Naive thymus-derived CD4-positive, alpha-beta T cell (primary cell): ENCODE measurements at regions of chr10 and their contacts with region 1.

Region 1: GRCh38 chr10:103481974-103482531 is 3.0 kb upstream of the CALHM3 start:
- DNase-seq: peak in 7 of 9 donors; percentile 41 to 69 (median 57)
- ATAC-seq: peak; percentile 79
- H3K4me3 ChIP-seq: no peak overlapping the region
- H3K4me3 Mint-ChIP-seq: no peak overlapping the region
- H3K27ac ChIP-seq: no peak overlapping the region
- H3K27ac Mint-ChIP-seq: no peak overlapping the region
- H3K4me1 ChIP-seq: no peaks in the 10 kb centered on the region
- H3K4me1 Mint-ChIP-seq: peaks cover 0 to 27% (median 4%) of the 10 kb centered on the region in 7 donors
- H3K27me3 ChIP-seq: no peaks in the 10 kb centered on the region
- H3K27me3 Mint-ChIP-seq: peaks cover 0 to 6% (median 0%) of the 10 kb centered on the region in 5 donors

Region 2: DNA sequence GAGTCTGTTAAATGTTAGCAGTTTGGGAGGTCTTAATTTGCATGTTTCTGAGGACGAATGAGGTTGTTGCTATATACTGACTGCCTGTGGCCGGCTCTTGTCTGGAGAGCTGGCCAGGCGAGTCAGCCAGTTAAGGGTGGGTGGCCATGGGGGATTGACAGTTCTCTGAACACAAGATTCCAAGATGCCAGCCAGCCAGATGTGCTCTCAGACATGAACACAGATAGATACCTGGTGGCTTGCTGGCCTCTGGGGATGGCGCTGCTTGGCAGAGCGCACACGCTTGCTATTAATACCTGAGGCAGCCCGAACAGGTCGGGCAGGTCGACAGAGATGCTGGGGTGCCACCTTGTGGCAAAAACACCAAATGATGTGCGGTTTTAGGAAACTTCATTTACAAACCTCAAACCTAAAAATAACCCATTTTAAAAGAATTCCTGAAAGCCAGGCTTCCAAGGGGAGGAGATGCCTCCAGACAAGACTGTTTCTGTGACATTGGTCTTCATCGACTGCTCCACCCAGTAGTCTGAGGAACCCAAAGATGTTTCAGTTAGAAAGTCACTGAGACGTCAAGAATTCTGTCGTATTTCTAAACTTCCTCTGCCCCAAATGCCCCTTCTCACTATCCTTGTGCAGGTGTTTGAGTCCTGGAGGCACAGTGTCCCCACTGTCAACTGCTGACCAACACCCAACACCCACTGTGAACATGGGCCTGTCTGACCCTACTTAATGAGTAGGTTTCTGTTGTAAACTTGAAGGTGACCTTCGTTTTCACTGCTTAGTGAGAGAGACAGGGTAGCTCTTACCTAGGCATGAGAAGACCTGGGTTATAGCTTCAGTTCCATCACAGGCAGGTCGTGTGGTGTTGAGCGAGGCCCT is 412.4 kb before region 1 on chr10:
- CTCF ChIA-PET with region 1: no interaction called
- POLR2A ChIA-PET with region 1: no interaction called
- intact Hi-C with region 1: loop called (anchors 1 to 10 kb)
- DNase-seq: peak; percentile 48 to 75 (median 68)
- ATAC-seq: peak; percentile 89
- H3K4me3 ChIP-seq: no peak overlapping the region
- H3K4me3 Mint-ChIP-seq: peak overlapping the region in 3 of 10 donors; percentile 21 to 61 (median 33)
- H3K27ac ChIP-seq: no peak overlapping the region
- H3K27ac Mint-ChIP-seq: peak overlapping the region in 6 of 9 donors; percentile 16 to 75 (median 62)
- H3K4me1 ChIP-seq: no peaks in the 10 kb centered on the region
- H3K4me1 Mint-ChIP-seq: peaks cover 16 to 35% (median 23%) of the 10 kb centered on the region in 7 donors
- H3K27me3 ChIP-seq: no peaks in the 10 kb centered on the region
- H3K27me3 Mint-ChIP-seq: no peaks in the 10 kb centered on the region

Region 3: GRCh38 chr10:103333925-103334520 is 148.0 kb before region 1 on chr10:
- CTCF ChIA-PET with region 1: no interaction called
- POLR2A ChIA-PET with region 1: no interaction called
- intact Hi-C with region 1: loop called in 1 of 2 experiments (anchors 5 kb)
- DNase-seq: peak in 5 of 9 donors; percentile 4 to 35 (median 18)
- ATAC-seq: no peak
- H3K4me3 ChIP-seq: no peak overlapping the region
- H3K4me3 Mint-ChIP-seq: no peak overlapping the region
- H3K27ac ChIP-seq: no peak overlapping the region
- H3K27ac Mint-ChIP-seq: no peak overlapping the region
- H3K4me1 ChIP-seq: no peaks in the 10 kb centered on the region
- H3K4me1 Mint-ChIP-seq: no peaks in the 10 kb centered on the region
- H3K27me3 ChIP-seq: no peaks in the 10 kb centered on the region
- H3K27me3 Mint-ChIP-seq: no peaks in the 10 kb centered on the region

Region 4: DNA sequence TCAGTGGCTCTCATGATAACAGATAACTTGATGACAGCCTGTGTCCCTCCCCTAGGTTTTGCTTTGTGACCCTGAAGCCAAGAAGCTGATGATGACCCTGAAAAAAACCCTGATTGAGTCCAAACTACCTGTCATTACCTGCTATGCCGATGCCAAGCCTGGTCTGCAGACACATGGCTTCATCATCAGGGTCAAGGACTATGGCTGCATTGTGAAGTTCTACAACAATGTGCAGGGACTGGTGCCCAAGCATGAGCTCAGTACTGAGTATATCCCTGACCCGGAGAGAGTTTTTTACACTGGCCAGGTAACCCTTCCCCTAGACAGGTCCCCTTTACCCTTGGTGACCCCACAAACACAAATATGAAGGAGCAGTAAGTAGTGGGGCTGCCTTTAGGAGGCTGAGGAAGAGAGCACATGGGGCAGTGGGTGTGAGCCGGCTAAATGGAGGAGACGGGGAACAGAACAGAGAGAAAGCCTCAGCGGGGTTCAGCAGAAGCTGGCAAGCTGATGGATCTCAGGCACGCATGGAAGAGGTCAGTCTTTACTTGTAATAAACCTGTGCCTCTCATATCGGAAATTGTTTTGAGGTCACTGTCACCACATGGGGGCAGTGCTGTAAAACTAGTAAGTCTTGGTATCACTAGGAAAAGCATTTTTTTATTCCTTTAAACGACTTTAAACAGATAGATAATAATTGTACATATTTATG is 65.5 kb before region 1 on chr10:
- CTCF ChIA-PET with region 1: interaction called, 99 read pairs
- POLR2A ChIA-PET with region 1: interaction called, 4 read pairs
- intact Hi-C with region 1: loop called (anchors 1 kb)
- DNase-seq: peak; percentile 29 to 62 (median 52)
- ATAC-seq: peak; percentile 64
- H3K4me3 ChIP-seq: no peak overlapping the region
- H3K4me3 Mint-ChIP-seq: no peak overlapping the region
- H3K27ac ChIP-seq: no peak overlapping the region
- H3K27ac Mint-ChIP-seq: no peak overlapping the region
- H3K4me1 ChIP-seq: no peaks in the 10 kb centered on the region
- H3K4me1 Mint-ChIP-seq: peaks cover 0 to 6% (median 0%) of the 10 kb centered on the region in 7 donors
- H3K27me3 ChIP-seq: no peaks in the 10 kb centered on the region
- H3K27me3 Mint-ChIP-seq: no peaks in the 10 kb centered on the region

Region 5: DNA sequence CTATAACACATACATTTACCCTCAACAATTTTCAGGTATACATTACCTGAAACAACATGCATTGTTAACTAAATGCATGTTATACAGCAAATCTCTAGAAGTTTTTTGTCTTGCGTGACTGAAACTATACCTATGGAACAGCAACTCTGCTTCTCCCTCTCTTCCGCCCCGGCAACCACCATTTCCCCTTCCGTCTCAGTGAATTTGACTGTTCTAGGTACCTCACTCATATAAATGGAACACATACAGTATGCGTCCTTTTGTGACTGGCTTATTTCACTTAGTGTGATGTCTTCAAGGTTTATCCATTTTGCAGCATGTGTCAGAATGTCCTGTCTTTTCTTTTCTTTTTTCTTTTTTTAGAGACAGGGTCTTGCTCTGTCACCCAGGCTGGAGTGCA is 52.4 kb before region 1 on chr10:
- CTCF ChIA-PET with region 1: interaction called, 3 read pairs
- POLR2A ChIA-PET with region 1: no interaction called
- intact Hi-C with region 1: loop called in 1 of 2 experiments (anchors 1 kb)
- DNase-seq: peak in 3 of 9 donors; percentile 18 to 39 (median 19)
- ATAC-seq: peak; percentile 54
- H3K4me3 ChIP-seq: no peak overlapping the region
- H3K4me3 Mint-ChIP-seq: peak overlapping the region; percentile 31 to 81 (median 73)
- H3K27ac ChIP-seq: peak overlapping the region; percentile 19
- H3K27ac Mint-ChIP-seq: peak overlapping the region in 7 of 9 donors; percentile 18 to 79 (median 33)
- H3K4me1 ChIP-seq: peaks cover 0 to 18% of the 10 kb centered on the region in 2 donors
- H3K4me1 Mint-ChIP-seq: peaks cover 16 to 58% (median 40%) of the 10 kb centered on the region in 7 donors
- H3K27me3 ChIP-seq: no peaks in the 10 kb centered on the region
- H3K27me3 Mint-ChIP-seq: no peaks in the 10 kb centered on the region

Region 6: DNA sequence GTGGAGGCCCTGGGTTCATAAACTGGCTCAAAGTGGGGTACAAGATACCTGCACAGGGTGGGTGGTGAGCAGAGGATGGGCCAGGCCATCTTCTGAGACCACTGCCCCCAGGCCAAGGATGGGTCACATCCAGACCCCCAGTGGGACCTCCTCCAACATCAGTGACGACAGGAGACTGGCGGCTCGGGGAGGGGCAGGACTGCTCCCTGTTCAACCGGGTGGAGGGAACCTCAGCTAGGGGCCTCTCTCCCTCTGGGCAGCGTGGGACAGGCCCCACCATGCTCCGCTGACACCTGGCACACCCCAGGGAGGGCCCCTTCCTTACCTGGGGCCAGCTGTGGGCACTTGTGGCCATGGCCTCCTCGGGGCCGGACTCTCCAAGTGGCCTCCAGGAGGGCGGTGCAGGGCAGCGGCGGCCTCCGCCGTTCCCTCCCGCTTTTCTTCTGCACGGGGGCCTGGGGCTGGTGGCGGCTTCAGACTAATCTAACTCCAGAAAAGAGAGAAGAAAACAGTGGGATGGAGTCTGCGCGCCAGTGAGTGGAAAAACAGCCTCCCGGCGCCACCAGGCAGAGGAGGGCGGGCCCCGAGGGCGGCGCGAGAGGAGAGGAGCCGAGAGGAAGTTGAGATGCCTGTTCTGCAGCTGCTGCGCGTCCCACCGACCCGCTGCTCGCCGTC is 30.1 kb before region 1 on chr10 and contains the start of gene CALHM2:
- CTCF ChIA-PET with region 1: interaction called, 3 read pairs
- POLR2A ChIA-PET with region 1: no interaction called
- intact Hi-C with region 1: loop called (anchors 1 kb)
- DNase-seq: peak; percentile 24 to 72 (median 43)
- ATAC-seq: peak; percentile 79
- H3K4me3 ChIP-seq: peak within 1 kb of the TSS; percentile 77
- H3K4me3 Mint-ChIP-seq: peak within 1 kb of the TSS; percentile 82 to 97 (median 90)
- H3K27ac ChIP-seq: peak within 1 kb of the TSS; percentile 63
- H3K27ac Mint-ChIP-seq: peak within 1 kb of the TSS; percentile 51 to 96 (median 79)
- H3K4me1 ChIP-seq: peaks cover 18 to 34% of the 10 kb centered on the region in 2 donors
- H3K4me1 Mint-ChIP-seq: peaks cover 27 to 56% (median 47%) of the 10 kb centered on the region in 7 donors
- H3K27me3 ChIP-seq: no peaks in the 10 kb centered on the region
- H3K27me3 Mint-ChIP-seq: no peaks in the 10 kb centered on the region
- total RNA-seq, gene CALHM2: 3.4 to 67.2 (median 19.3) TPM